ENCODE measurements at regions of chr2 and their contacts with region 1.

Region 1: DNA sequence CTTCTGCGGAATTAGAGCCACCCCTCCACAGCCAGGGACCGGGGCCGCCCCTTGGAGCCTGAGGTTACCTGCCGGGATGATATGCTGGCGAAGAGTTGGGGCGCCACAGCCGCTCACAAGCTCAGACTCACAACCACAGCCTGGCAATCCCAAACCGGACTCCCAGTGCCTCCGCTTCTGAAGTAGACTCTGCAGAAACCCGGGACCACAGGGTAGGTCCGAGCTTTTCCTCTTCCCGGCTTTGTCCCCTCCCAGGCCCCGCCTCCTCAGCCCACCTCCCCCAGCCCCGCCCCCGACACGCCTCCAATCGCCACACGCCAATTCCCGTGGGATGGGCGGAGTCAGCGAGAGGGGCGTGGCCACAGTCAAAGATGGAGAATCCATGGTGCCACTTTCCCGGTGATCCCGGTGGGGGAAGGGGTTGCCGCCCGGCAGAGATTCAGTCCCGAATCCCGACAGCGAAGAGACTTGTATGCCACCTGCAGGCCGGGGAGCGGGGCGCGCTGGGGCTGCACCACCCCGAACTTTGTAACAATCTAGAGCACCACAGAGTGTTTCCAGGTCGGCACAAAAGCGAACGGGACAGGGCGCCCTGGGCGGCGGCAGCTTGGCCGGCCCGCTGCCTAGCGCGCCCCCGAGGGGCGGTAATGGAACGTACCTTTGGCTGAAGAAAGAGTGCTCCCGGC is at the start of gene IDH1:
- DNase-seq: peak; percentile 97
- ATAC-seq: peak; percentile 95 to 98
- total RNA-seq, gene IDH1: 36.5 to 79.9 TPM

Region 2: DNA sequence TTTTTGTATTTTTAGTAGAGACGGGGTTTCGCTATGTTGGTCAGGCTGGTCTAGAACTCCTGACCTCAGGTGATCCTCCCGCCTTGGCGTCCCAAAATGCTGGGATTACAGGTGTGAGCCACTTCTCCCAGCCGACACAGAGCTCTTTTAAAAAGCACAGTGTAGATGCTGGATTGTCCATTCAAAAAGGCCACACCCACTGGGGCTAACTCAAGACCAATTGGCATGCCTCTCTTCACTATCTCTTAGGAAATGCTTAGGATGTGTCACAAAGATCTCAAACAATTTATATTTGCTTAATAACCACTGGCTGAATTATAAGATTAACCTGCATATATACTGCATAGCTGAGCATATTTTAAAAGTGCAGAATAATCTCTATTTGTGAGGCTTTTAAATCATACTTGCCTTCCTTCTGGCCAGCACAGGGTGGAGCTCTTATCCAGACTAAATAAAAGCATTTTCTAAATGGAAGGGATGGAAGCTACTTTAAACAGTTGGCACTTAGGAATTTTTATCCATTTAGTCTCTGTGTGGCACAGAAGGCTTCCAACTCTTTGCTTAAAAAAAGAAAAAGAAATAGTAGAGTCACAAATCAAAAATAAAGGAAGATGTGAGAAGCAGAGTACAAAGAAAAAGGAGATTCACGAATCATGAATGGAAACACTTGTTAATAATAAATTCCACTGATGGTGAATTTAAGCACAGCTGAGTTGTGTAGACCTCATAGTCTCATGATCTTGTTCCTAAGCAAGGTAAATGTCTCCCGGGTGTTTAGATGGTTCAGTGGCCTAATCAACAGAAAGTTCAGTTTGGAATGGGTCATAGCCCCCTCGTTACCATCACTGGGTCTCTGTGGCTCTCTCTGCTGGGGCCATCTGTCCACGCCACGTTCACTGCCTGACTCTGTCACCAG is 153.0 kb before region 1 on chr2:
- intact Hi-C with region 1: loop called in 1 of 2 experiments (anchors 10 kb)
- DNase-seq: no peak
- ATAC-seq: peak; percentile 35 to 40

Region 3: GRCh38 chr2:208175069-208175839 is 79.8 kb before region 1 on chr2:
- intact Hi-C with region 1: loop called in 1 of 2 experiments (anchors 2 kb)
- DNase-seq: peak; percentile 73
- ATAC-seq: peak; percentile 97 to 98